ENCODE measurements at regions of chr16 and their contacts with region 1.

Region 1: GRCh38 chr16:2867987-2868789 is 10.2 kb upstream of the PRSS22 start:
- DNase-seq: peak; percentile 93 to 97 (median 94)
- ATAC-seq: peak; percentile 96 to 99 (median 98)
- H3K4me3 ChIP-seq: peak overlapping the region; percentile 47 to 84 (median 72)
- H3K27ac ChIP-seq: peak overlapping the region; percentile 88 to 98 (median 94)
- H3K4me1 ChIP-seq: peaks cover 0 to 16% (median 3%) of the 10 kb centered on the region in 12 donors
- H3K27me3 ChIP-seq: peaks cover 0 to 19% (median 0%) of the 10 kb centered on the region in 9 donors
- CTCF ChIP-seq: peak; percentile 97 to 99 (median 98)
- POLR2A ChIP-seq: peak in 1 of 2 donors; percentile 50

Region 2: GRCh38 chr16:2784951-2785635 is 83.1 kb before region 1 on chr16:
- intact Hi-C with region 1: loop called in 1 of 10 experiments (anchors 10 kb)
- DNase-seq: peak in 2 of 5 donors; percentile 16 to 21
- ATAC-seq: peak in 2 of 4 donors; percentile 27 to 31
- H3K4me3 ChIP-seq: peak overlapping the region in 11 of 12 donors; percentile 14 to 56 (median 36)
- H3K27ac ChIP-seq: no peak overlapping the region
- H3K4me1 ChIP-seq: peaks cover 0 to 12% (median 1%) of the 10 kb centered on the region in 12 donors
- H3K27me3 ChIP-seq: peaks cover 17 to 48% (median 39%) of the 10 kb centered on the region in 9 donors
- CTCF ChIP-seq: no peak
- POLR2A ChIP-seq: no peak

Region 3: DNA sequence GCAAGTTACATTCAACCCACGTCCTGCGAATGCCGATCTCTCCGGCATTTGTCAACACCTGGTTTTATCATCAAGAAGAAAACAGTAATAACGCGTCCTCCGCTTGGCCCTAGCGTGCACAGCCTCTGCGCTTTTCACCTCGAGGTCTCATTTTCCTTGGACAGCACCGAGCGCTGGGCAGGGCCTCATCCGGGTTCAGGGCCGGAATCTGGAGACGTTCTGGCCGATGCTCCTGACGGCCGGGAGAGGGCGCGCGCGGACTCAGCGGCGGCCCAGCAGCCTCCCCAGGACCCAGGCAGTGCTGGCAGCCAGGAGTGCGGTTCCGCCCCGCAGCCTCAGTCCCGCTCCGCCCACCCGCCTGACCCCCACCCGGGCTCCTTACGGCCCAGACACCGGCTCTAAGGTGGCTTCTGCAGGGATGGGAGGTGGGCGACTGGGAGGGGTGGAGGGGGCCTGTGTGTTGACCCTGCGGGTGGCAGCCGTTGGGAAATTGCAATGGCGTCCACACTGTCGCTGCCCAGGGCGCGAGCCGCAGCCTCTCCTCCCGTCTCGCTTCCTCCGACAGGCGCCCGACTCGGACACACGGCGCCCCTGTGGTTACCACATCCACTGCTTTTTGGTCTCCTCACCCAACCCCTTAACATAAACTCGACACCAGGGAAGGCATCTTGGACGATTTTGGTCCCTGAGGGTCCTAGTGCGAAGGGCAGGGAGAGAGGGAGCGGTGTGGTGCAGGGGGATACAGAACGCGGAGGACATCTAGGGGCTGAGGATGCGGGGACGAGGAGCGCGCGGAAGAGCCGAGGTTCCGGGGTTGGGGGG is 36.1 kb after region 1 on chr16:
- intact Hi-C with region 1: no loop called
- DNase-seq: peak; percentile 89 to 93 (median 89)
- ATAC-seq: peak; percentile 12 to 63 (median 62)
- H3K4me3 ChIP-seq: peak overlapping the region; percentile 64 to 96 (median 81)
- H3K27ac ChIP-seq: peak overlapping the region; percentile 91 to 100 (median 97)
- H3K4me1 ChIP-seq: peaks cover 0 to 23% (median 12%) of the 10 kb centered on the region in 12 donors
- H3K27me3 ChIP-seq: no peaks in the 10 kb centered on the region
- CTCF ChIP-seq: peak; percentile 88 to 99 (median 97)
- POLR2A ChIP-seq: no peak

Measured in heart left ventricle (tissue), 16 donors.